Activated CD4-positive, alpha-beta memory T cell treated with anti-CD3 and anti-CD28 coated beads for 36 hours (primary cell): ENCODE measurements at regions of chr20 and their contacts with region 1.

Region 1: DNA sequence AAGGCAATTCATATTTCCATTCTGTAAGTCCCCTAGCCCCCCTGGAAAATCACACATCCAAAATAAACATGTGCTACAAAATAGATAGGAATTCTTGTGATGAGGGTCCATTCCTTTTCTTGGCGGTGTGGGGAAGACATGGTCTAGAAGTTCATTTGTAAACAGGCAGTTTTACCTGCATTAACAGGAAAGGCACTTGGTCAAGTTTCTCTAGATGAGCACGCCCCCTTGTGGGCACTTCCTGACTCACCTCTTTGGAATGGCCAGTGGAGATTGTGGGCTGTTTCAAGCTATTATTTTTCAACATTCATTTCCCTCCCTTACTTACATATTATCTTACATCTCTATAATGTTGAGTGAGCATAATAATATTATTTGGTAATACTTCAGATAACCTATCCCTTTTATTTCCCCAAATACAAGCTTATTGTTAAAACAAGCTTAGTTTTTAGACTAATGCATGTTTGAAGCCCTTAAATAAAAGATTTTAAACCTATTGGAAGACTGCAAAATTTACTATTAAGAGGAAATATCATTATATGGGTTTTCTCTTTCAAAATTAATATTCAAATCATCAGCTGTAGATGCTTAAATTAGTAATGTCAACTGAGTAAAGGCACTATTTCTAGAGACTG is 92.1 kb downstream of the TASP1 start:
- DNase-seq: peak; percentile 77
- H3K4me3 Mint-ChIP-seq: no peak overlapping the region
- H3K27ac Mint-ChIP-seq: no peak overlapping the region
- H3K4me1 Mint-ChIP-seq: peaks cover 2% of the 10 kb centered on the region
- H3K27me3 Mint-ChIP-seq: no peaks in the 10 kb centered on the region

Region 2: DNA sequence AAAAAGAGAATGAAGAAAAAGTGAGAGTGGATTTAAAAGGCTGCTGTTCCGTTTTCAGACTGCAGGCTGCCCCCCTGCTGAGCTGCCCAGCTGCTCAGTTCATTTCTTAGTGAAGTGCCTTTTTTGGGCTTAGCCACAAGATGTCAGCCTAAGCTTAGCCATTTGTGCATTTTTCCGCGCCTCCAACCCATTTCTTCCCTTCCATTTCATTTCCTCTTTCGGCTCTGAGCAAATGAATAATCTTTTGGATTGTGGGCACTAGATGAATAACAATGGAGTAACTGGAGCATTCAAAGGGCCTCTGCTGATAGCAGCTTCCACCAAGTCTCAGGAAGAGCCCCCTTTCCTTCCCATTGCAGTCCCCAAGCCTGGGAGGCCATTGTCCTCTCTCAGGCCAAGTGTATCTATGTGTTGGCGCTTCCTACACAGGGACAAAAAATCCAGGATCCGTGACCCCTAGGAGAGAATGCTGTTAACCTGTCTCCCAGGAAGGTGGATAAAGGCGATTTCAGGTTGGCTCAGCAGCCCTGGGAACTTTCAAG is 621.3 kb before region 1 on chr20:
- CTCF ChIA-PET with region 1: no interaction called
- POLR2A ChIA-PET with region 1: no interaction called
- intact Hi-C with region 1: loop called (anchors 5 kb)
- DNase-seq: peak; percentile 28
- H3K4me3 Mint-ChIP-seq: no peak overlapping the region
- H3K27ac Mint-ChIP-seq: no peak overlapping the region
- H3K4me1 Mint-ChIP-seq: no peaks in the 10 kb centered on the region
- H3K27me3 Mint-ChIP-seq: no peaks in the 10 kb centered on the region

Region 3: GRCh38 chr20:13119583-13119982 is 427.0 kb before region 1 on chr20:
- CTCF ChIA-PET with region 1: interaction called, 56 read pairs
- POLR2A ChIA-PET with region 1: no interaction called
- intact Hi-C with region 1: loop called (anchors 1 kb)
- DNase-seq: peak; percentile 39
- H3K4me3 Mint-ChIP-seq: no peak overlapping the region
- H3K27ac Mint-ChIP-seq: no peak overlapping the region
- H3K4me1 Mint-ChIP-seq: no peaks in the 10 kb centered on the region
- H3K27me3 Mint-ChIP-seq: peaks cover 1% of the 10 kb centered on the region

Region 4: GRCh38 chr20:13458860-13459451 is 87.7 kb before region 1 on chr20:
- CTCF ChIA-PET with region 1: interaction called, 12 read pairs
- POLR2A ChIA-PET with region 1: no interaction called
- intact Hi-C with region 1: loop called (anchors 1 kb)
- DNase-seq: peak; percentile 11
- H3K4me3 Mint-ChIP-seq: no peak overlapping the region
- H3K27ac Mint-ChIP-seq: no peak overlapping the region
- H3K4me1 Mint-ChIP-seq: no peaks in the 10 kb centered on the region
- H3K27me3 Mint-ChIP-seq: no peaks in the 10 kb centered on the region

Region 5: DNA sequence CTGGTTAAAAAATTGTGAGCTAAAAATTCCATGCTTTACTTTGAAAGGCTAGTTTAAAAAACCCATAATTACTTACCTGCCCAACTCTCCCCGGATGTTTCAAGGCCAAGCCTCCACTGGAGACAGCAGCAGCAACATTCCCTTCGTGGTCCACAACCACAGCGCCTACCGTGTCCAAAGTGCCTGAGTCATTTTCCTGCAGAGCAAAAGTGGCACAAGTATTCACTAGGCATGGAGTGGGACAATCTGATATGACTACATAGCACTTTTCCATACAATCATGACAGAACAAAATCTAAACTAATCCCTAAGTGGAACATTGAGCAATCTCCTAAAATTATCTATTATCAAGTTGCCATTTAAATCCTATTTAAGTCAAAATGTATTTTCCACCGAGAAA is 12.7 kb before region 1 on chr20:
- CTCF ChIA-PET with region 1: interaction called, 40 read pairs
- POLR2A ChIA-PET with region 1: no interaction called
- intact Hi-C with region 1: no loop called
- DNase-seq: no peak
- H3K4me3 Mint-ChIP-seq: no peak overlapping the region
- H3K27ac Mint-ChIP-seq: no peak overlapping the region
- H3K4me1 Mint-ChIP-seq: no peaks in the 10 kb centered on the region
- H3K27me3 Mint-ChIP-seq: no peaks in the 10 kb centered on the region

Region 6: GRCh38 chr20:13567663-13568062 is 21.0 kb after region 1 on chr20:
- CTCF ChIA-PET with region 1: interaction called, 21 read pairs
- POLR2A ChIA-PET with region 1: no interaction called
- intact Hi-C with region 1: no loop called
- DNase-seq: no peak
- H3K4me3 Mint-ChIP-seq: no peak overlapping the region
- H3K27ac Mint-ChIP-seq: no peak overlapping the region
- H3K4me1 Mint-ChIP-seq: no peaks in the 10 kb centered on the region
- H3K27me3 Mint-ChIP-seq: no peaks in the 10 kb centered on the region

Region 7: DNA sequence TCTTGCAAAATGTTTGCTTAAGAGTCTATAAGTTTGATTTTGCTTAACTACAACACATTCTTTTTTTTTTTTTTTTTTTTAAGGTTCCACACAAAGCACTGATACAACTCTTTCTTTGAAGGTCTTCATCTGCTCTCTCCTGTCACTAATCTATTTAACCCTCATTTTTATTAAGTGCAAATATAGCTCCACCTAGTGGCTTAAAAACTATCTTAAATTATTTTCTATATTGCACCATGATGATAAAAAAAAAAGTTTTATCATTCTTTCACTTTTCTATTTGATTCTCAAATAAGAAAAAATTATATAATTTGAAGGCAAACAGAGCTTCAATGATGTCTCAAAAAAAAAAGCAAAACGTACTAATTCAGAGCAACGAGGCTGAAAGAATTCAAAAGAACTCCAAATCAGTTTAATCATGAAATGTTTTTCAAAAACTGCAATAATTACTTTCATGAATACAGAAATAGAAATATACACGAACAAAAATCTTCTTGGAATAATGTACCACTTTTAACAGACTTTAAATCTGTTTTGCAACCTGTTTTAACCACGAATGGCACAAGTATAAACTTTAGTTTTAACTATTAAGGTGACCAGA is 225.3 kb after region 1 on chr20:
- CTCF ChIA-PET with region 1: interaction called, 17 read pairs
- POLR2A ChIA-PET with region 1: no interaction called
- intact Hi-C with region 1: no loop called
- DNase-seq: no peak
- H3K4me3 Mint-ChIP-seq: no peak overlapping the region
- H3K27ac Mint-ChIP-seq: no peak overlapping the region
- H3K4me1 Mint-ChIP-seq: peaks cover 15% of the 10 kb centered on the region
- H3K27me3 Mint-ChIP-seq: no peaks in the 10 kb centered on the region